Mammary epithelial cell (primary cell): ENCODE measurements at regions of chr5 and their contacts with region 1.

Region 1: DNA sequence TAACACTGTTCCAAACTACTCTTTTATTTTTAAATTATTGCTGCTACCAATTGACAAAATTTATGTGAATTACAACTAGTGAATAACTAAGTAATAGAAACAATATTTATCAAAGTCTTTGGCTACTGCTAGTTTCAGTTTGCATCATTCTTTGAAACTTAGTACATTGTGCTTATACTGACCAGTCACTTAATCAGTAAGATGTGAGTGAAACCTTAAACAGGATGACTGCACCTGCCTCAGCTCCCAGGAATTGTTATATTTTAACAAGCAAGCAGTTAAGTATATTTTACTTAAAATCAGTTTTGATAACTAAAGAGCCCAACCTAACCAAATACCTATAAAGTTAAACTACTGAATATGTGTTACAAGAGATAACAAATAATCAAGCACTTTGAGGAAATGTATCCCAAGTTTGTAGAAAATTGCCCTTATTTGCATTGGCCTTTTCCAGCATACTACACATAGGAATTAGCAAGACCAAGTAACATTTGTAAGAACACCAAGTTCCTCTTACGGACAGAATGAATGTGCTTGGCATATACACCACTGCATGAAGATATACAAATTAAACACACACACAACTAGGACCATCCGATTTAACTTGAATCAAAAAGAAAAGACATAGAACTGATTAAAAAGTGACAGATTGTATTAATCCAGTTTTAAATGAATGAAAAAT is 545.5 kb upstream of the DAB2 start:
- DNase-seq: no peak
- H3K4me3 ChIP-seq: no peak overlapping the region
- H3K27ac ChIP-seq: no peak overlapping the region
- H3K4me1 ChIP-seq: no peaks in the 10 kb centered on the region
- H3K27me3 ChIP-seq: peaks cover 8% of the 10 kb centered on the region
- CTCF ChIP-seq: no peak

Region 2: DNA sequence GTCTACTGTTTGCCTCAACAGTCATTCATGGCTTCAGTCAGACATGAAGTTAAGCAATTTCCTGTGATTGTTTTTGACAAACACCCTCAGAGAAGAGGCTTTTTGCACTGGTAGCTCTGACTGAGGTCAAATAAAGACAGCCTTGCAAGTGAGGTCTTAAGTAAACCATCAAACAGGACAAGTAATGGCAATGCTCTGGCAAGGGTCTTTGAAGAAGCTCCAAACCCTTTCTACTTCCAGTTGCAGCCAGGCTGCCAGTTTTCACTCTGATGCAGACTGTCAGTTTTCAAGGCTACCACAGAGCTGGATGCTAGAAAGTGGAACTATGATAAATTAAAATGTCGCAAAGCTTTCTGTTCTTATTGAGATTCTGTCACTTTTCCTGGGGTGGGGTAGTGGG is 288.0 kb after region 1 on chr5:
- CTCF ChIA-PET with region 1: no interaction called
- dilution Hi-C with region 1: no loop called
- in situ Hi-C with region 1: no loop called
- intact Hi-C with region 1: no loop called
- DNase-seq: no peak
- H3K4me3 ChIP-seq: no peak overlapping the region
- H3K27ac ChIP-seq: no peak overlapping the region
- H3K4me1 ChIP-seq: peaks cover 4% of the 10 kb centered on the region
- H3K27me3 ChIP-seq: no peaks in the 10 kb centered on the region
- CTCF ChIP-seq: no peak

Region 3: DNA sequence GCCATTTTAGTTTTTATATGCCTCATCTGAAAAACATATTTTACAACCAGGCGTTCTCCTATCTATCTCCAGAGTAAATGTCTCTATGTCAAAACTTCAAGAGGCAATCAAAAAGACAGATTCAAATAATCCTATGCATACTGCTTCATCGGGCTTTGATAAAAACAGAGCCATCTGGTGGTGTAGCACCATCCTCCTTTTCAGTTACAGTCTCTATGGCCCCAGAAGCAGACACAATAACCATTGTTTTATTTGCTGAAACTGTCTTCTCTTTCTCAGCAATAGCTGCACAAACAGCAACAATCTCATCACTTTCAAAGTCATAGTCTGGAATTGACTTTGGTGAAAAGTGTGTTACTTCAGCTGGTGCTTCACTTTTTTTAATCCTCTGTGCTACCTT is 745.7 kb after region 1 on chr5:
- CTCF ChIA-PET with region 1: no interaction called
- dilution Hi-C with region 1: no loop called
- in situ Hi-C with region 1: loop called in 1 of 2 experiments (anchors 25 kb)
- intact Hi-C with region 1: no loop called
- DNase-seq: no peak
- H3K4me3 ChIP-seq: no peak overlapping the region
- H3K27ac ChIP-seq: no peak overlapping the region
- H3K4me1 ChIP-seq: no peaks in the 10 kb centered on the region
- H3K27me3 ChIP-seq: no peaks in the 10 kb centered on the region
- CTCF ChIP-seq: peak; percentile 32 to 46